Activated CD4-positive, alpha-beta memory T cell treated with anti-CD3 and anti-CD28 coated beads for 36 hours (primary cell): ENCODE measurements at regions of chr9 and their contacts with region 1.

Region 1: GRCh38 chr9:89418882-89419640 is 78.9 kb downstream of the SEMA4D start:
- DNase-seq: peak; percentile 87
- H3K4me3 Mint-ChIP-seq: peak overlapping the region; percentile 58
- H3K27ac Mint-ChIP-seq: peak overlapping the region; percentile 100
- H3K4me1 Mint-ChIP-seq: peaks cover 92% of the 10 kb centered on the region
- H3K27me3 Mint-ChIP-seq: no peaks in the 10 kb centered on the region

Region 2: GRCh38 chr9:89489548-89490530 is 70.8 kb after region 1 on chr9:
- CTCF ChIA-PET with region 1: no interaction called
- POLR2A ChIA-PET with region 1: no interaction called
- intact Hi-C with region 1: loop called (anchors 2 kb)
- DNase-seq: peak; percentile 9
- H3K4me3 Mint-ChIP-seq: peak overlapping the region; percentile 39
- H3K27ac Mint-ChIP-seq: peak overlapping the region; percentile 70
- H3K4me1 Mint-ChIP-seq: peaks cover 94% of the 10 kb centered on the region
- H3K27me3 Mint-ChIP-seq: no peaks in the 10 kb centered on the region

Region 3: GRCh38 chr9:89522261-89522958 is 103.3 kb after region 1 on chr9:
- CTCF ChIA-PET with region 1: no interaction called
- POLR2A ChIA-PET with region 1: interaction called, 3 read pairs
- intact Hi-C with region 1: loop called (anchors 1 kb)
- DNase-seq: peak; percentile 89
- H3K4me3 Mint-ChIP-seq: peak overlapping the region; percentile 58
- H3K27ac Mint-ChIP-seq: peak overlapping the region; percentile 92
- H3K4me1 Mint-ChIP-seq: peaks cover 89% of the 10 kb centered on the region
- H3K27me3 Mint-ChIP-seq: no peaks in the 10 kb centered on the region

Region 4: DNA sequence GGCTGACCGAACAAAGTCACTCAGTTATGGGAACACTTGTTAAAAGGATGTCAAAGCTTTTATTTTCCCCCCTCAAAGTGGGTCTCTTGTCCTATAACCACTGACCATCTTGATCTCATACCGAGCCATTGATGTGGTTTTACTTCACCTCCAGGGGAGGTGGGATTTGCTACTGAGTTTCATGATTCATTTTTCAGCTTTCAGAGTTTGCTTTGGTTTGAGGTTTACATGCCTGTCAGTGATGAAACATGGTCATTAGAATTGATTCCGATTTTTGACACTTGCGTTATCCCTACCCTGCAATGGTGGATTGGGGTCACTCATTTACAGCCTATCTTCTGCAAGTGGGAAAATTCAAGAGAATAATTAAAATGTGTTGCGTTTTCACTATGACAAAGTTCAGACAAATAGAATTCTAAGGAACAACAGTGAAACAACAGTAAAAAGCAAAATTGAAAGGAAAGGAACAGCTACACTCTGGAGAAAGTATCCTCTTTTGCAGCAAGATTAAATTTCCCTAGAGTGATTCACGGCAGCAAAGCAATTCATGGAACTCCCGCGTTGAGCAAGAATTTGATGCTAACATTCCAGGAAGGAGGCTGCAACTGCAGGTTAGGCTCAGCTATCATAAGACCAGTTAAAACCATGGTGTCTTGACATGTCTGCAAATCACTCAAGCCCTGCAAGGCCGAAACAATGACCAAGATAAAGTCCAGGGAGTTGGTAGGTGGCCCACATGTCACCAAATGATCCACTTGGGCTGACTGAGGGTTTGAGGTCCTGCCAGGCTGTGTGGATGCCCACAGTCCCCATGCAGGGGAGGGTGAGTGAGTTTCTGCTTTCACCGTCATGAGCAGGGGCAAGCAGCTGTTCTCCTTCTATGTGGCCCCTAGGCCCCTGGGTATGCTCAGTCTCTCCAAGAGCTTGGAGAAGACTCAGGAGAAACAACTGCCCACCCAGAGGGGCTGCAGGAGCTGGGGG is 195.1 kb after region 1 on chr9:
- CTCF ChIA-PET with region 1: no interaction called
- POLR2A ChIA-PET with region 1: no interaction called
- intact Hi-C with region 1: no loop called
- DNase-seq: no peak
- H3K4me3 Mint-ChIP-seq: no peak overlapping the region
- H3K27ac Mint-ChIP-seq: no peak overlapping the region
- H3K4me1 Mint-ChIP-seq: peaks cover 15% of the 10 kb centered on the region
- H3K27me3 Mint-ChIP-seq: no peaks in the 10 kb centered on the region

Region 5: DNA sequence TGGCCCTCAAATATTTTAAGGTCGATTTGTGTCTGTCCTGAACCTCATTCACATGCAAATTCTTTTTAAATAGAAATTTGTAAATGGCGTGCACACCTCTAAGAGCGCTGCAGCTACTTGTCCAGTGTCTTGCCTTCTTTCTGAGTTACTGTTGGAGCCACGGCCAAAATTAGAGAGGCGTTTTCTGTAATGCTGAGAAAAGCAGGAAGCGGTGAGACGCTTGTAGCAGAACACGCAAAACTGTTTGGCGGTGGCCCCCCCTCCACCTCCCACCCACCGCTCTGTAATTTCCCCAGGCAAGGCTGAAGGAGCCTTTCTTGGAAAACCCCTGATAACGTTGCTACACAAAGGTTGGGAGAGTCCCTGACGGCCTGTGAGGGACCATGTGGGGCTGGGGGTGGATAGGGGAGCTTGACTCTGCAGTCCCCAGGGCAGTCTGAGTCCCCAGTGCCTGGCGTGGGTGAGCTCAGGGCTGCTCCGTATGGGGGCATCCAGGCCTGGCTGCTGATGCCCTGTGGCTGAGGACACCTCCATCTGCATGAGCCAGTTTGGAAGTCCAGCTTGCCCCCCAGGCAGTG is 282.2 kb after region 1 on chr9:
- CTCF ChIA-PET with region 1: no interaction called
- POLR2A ChIA-PET with region 1: no interaction called
- intact Hi-C with region 1: loop called (anchors 2 kb)
- DNase-seq: peak; percentile 93
- H3K4me3 Mint-ChIP-seq: peak overlapping the region; percentile 52
- H3K27ac Mint-ChIP-seq: peak overlapping the region; percentile 34
- H3K4me1 Mint-ChIP-seq: peaks cover 44% of the 10 kb centered on the region
- H3K27me3 Mint-ChIP-seq: no peaks in the 10 kb centered on the region